Heart left ventricle (tissue), 16 donors: ENCODE measurements at regions of chr4 and their contacts with region 1.

Region 1: GRCh38 chr4:54322818-54323417 is 93.8 kb downstream of the PDGFRA start:
- DNase-seq: peak in 4 of 5 donors; percentile 51 to 64 (median 60)
- ATAC-seq: peak; percentile 47 to 80 (median 78)
- H3K4me3 ChIP-seq: no peak overlapping the region
- H3K27ac ChIP-seq: no peak overlapping the region
- H3K4me1 ChIP-seq: peaks cover 0 to 3% (median 0%) of the 10 kb centered on the region in 12 donors
- H3K27me3 ChIP-seq: no peaks in the 10 kb centered on the region
- CTCF ChIP-seq: peak; percentile 63 to 83 (median 72)
- POLR2A ChIP-seq: no peak

Region 2: DNA sequence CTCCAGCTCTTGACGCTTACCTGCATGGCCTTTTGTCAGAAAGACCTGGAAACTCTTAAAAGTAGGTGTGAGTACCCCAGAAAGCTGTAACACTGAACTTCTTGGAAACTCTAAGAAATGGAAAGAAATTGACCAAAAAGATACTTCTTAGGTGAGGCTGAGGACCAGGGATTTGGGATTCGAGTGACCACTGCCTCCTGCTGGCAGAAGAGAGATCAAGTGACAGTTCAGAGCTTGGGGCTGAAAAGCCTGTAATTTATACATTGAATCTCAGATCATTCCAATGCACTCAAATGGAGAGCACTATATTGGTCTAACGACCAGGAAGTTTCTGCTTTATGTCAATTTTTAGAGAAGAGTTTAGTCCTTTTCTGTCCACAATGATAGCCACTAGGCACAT is 110.8 kb after region 1 on chr4:
- intact Hi-C with region 1: loop called in 2 of 10 experiments (anchors 2 kb)
- DNase-seq: no peak
- ATAC-seq: no peak
- H3K4me3 ChIP-seq: no peak overlapping the region
- H3K27ac ChIP-seq: no peak overlapping the region
- H3K4me1 ChIP-seq: no peaks in the 10 kb centered on the region
- H3K27me3 ChIP-seq: no peaks in the 10 kb centered on the region
- CTCF ChIP-seq: peak; percentile 13 to 56 (median 36)
- POLR2A ChIP-seq: no peak

Region 3: GRCh38 chr4:54539500-54540029 is 216.6 kb after region 1 on chr4:
- intact Hi-C with region 1: no loop called
- DNase-seq: peak; percentile 30 to 80 (median 66)
- ATAC-seq: peak; percentile 78 to 95 (median 94)
- H3K4me3 ChIP-seq: peak overlapping the region in 11 of 12 donors; percentile 12 to 57 (median 46)
- H3K27ac ChIP-seq: no peak overlapping the region
- H3K4me1 ChIP-seq: peaks cover 0 to 10% (median 4%) of the 10 kb centered on the region in 12 donors
- H3K27me3 ChIP-seq: peaks cover 0 to 5% (median 0%) of the 10 kb centered on the region in 9 donors
- CTCF ChIP-seq: peak in 2 of 12 donors; percentile 15 to 18
- POLR2A ChIP-seq: no peak

Region 4: GRCh38 chr4:54658252-54659093 is 335.6 kb after region 1 on chr4:
- intact Hi-C with region 1: loop called in 2 of 10 experiments (anchors 10 kb)
- DNase-seq: peak; percentile 46 to 75 (median 53)
- ATAC-seq: peak; percentile 34 to 84 (median 82)
- H3K4me3 ChIP-seq: peak overlapping the region; percentile 27 to 75 (median 62)
- H3K27ac ChIP-seq: peak overlapping the region in 8 of 12 donors; percentile 22 to 60 (median 34)
- H3K4me1 ChIP-seq: peaks cover 0 to 33% (median 28%) of the 10 kb centered on the region in 12 donors
- H3K27me3 ChIP-seq: peaks cover 0 to 38% (median 0%) of the 10 kb centered on the region in 9 donors
- CTCF ChIP-seq: peak in 10 of 12 donors; percentile 17 to 60 (median 32)
- POLR2A ChIP-seq: no peak

Region 5: DNA sequence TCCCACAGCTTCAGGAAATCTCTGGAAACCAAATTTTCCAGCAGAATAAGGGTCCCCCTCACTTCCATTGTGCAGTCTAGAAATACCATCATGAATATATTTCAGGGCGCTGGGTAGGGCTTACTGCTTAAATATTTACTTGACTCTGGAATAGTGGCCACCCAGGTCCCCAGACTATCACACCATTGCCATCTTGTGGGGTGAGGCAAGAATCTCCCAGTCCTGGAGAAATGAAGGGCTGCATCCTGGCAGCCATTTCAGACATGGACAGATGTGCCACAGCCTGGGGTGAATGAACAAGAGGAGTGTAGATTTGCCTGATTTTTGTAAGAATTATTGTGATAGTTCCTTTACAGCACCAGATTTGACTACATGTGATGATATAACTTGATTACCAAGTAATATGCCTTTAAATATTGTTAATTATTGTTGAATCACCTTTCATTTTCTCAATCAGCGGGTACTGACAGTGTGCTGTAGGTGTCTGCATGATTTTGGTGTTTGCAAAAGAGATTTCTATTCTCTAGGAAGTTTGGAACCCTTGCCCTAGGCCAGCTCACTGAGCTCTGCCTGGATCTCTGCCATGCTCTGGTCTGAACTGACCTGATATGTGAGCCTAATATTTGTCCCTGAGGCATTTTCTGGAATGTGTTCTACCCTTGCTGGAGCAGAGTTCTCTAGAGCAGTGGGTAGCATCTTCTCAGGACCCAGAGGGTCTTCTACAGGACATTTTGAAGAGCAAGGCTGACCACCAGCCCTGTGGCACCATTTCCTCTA is 518.3 kb after region 1 on chr4:
- intact Hi-C with region 1: loop called in 8 of 10 experiments (anchors 2 to 5 kb)
- DNase-seq: peak in 3 of 5 donors; percentile 21 to 37 (median 21)
- ATAC-seq: peak in 3 of 4 donors; percentile 69 to 86 (median 80)
- H3K4me3 ChIP-seq: no peak overlapping the region
- H3K27ac ChIP-seq: no peak overlapping the region
- H3K4me1 ChIP-seq: peaks cover 0 to 16% (median 0%) of the 10 kb centered on the region in 12 donors
- H3K27me3 ChIP-seq: no peaks in the 10 kb centered on the region
- CTCF ChIP-seq: peak in 11 of 12 donors; percentile 22 to 51 (median 36)
- POLR2A ChIP-seq: no peak

Region 6: GRCh38 chr4:55312489-55313101 is 989.7 kb after region 1 on chr4:
- intact Hi-C with region 1: loop called in 2 of 10 experiments (anchors 10 kb)
- DNase-seq: peak in 4 of 5 donors; percentile 45 to 52 (median 50)
- ATAC-seq: peak; percentile 33 to 94 (median 87)
- H3K4me3 ChIP-seq: no peak overlapping the region
- H3K27ac ChIP-seq: peak overlapping the region in 4 of 12 donors; percentile 8 to 27 (median 20)
- H3K4me1 ChIP-seq: peaks cover 0 to 12% (median 0%) of the 10 kb centered on the region in 12 donors
- H3K27me3 ChIP-seq: no peaks in the 10 kb centered on the region
- CTCF ChIP-seq: peak; percentile 53 to 79 (median 64)
- POLR2A ChIP-seq: no peak